ENCODE measurements at regions of chr9 and their contacts with region 1.

Region 1: GRCh38 chr9:70602321-70603019 is 188.0 kb upstream of the KLF9 start:
- DNase-seq: peak; percentile 59
- ATAC-seq: peak; percentile 76
- H3K4me3 Mint-ChIP-seq: no peak overlapping the region
- H3K27ac Mint-ChIP-seq: no peak overlapping the region
- H3K4me1 Mint-ChIP-seq: peaks cover 4% of the 10 kb centered on the region
- H3K27me3 Mint-ChIP-seq: no peaks in the 10 kb centered on the region

Region 2: DNA sequence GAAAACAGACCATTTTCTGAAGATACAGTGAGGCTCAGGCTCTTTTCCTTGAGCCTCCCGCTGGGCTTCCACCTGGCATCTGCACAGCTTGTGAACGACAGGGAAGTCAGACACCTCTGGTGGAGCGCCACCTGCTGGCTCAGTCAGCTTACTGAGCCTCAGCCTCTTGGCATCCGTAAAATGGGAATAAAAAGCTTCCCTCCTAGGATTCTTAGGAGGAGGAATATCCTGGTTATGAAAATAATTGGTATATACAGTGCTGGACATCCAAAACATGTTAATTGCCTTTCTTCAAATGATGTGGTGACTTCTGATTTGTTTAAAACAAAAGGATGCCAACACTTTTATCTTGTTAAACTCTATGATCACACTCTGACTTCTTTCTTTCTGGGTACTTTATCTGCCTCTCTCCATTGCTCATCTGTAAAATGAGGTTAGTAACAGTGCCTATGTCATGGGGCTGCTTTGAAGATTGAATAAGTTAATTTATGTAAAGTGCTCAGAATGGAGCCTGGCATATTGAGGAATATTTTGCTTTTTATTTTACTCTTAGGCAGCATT is 491.3 kb before region 1 on chr9:
- CTCF ChIA-PET with region 1: interaction called, 11 read pairs
- POLR2A ChIA-PET with region 1: no interaction called
- DNase-seq: peak; percentile 66
- ATAC-seq: peak; percentile 75
- H3K4me3 Mint-ChIP-seq: no peak overlapping the region
- H3K27ac Mint-ChIP-seq: no peak overlapping the region
- H3K4me1 Mint-ChIP-seq: no peaks in the 10 kb centered on the region
- H3K27me3 Mint-ChIP-seq: peaks cover 13% of the 10 kb centered on the region

Region 3: DNA sequence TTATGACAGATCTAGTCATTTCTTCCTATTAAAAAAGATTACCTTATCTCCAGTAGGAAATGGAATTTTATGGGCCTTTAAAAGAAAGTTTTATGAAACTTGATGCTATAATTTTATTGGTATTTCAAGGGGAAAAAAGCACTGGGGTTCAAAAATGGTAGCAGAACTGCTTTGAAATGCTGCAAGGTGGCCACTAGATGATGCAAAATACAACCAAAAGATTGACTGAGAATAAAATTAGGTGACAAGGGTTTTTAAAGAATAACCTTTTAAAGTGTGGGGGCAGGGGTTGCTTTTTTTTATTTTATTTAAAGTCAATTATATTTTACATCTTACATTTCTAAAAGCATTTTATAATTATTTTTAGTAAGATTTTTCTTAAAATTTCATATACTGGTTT is 249.7 kb before region 1 on chr9:
- CTCF ChIA-PET with region 1: interaction called, 10 read pairs
- POLR2A ChIA-PET with region 1: no interaction called
- DNase-seq: no peak
- ATAC-seq: no peak
- H3K4me3 Mint-ChIP-seq: no peak overlapping the region
- H3K27ac Mint-ChIP-seq: peak overlapping the region; percentile 41
- H3K4me1 Mint-ChIP-seq: no peaks in the 10 kb centered on the region
- H3K27me3 Mint-ChIP-seq: no peaks in the 10 kb centered on the region

Region 4: DNA sequence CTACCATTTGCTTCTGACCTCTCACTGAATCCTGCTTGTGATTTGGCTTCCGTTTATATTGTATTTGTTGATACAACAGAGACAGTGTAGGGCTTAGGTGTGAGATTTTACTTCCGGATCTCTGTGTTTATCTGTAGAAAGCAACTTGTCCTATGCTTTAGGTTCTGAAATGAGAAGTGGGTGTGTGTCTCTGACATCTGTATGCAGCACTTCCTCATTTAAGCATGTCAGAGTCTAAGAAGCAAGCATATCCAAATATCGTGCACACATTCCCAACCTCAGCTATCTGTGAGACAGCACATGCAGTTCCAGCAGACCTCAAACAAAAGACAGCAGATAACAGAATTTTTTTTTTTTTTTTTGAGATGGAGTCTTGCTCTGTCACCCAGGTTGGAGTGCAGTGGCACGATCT is 204.3 kb before region 1 on chr9:
- CTCF ChIA-PET with region 1: interaction called, 27 read pairs
- POLR2A ChIA-PET with region 1: no interaction called
- DNase-seq: no peak
- ATAC-seq: peak; percentile 89
- H3K4me3 Mint-ChIP-seq: peak overlapping the region; percentile 51
- H3K27ac Mint-ChIP-seq: peak overlapping the region; percentile 79
- H3K4me1 Mint-ChIP-seq: peaks cover 40% of the 10 kb centered on the region
- H3K27me3 Mint-ChIP-seq: no peaks in the 10 kb centered on the region

Region 5: GRCh38 chr9:70413798-70414775 is 188.4 kb before region 1 on chr9 and contains the start of gene KLF9:
- CTCF ChIA-PET with region 1: interaction called, 57 read pairs
- POLR2A ChIA-PET with region 1: interaction called, 10 read pairs
- DNase-seq: peak; percentile 97
- ATAC-seq: peak; percentile 82
- H3K4me3 Mint-ChIP-seq: peak within 1 kb of the TSS; percentile 93
- H3K27ac Mint-ChIP-seq: peak within 1 kb of the TSS; percentile 99
- H3K4me1 Mint-ChIP-seq: peaks cover 48% of the 10 kb centered on the region
- H3K27me3 Mint-ChIP-seq: no peaks in the 10 kb centered on the region
- total RNA-seq, gene KLF9: 8.8 to 9.6 TPM

Region 6: DNA sequence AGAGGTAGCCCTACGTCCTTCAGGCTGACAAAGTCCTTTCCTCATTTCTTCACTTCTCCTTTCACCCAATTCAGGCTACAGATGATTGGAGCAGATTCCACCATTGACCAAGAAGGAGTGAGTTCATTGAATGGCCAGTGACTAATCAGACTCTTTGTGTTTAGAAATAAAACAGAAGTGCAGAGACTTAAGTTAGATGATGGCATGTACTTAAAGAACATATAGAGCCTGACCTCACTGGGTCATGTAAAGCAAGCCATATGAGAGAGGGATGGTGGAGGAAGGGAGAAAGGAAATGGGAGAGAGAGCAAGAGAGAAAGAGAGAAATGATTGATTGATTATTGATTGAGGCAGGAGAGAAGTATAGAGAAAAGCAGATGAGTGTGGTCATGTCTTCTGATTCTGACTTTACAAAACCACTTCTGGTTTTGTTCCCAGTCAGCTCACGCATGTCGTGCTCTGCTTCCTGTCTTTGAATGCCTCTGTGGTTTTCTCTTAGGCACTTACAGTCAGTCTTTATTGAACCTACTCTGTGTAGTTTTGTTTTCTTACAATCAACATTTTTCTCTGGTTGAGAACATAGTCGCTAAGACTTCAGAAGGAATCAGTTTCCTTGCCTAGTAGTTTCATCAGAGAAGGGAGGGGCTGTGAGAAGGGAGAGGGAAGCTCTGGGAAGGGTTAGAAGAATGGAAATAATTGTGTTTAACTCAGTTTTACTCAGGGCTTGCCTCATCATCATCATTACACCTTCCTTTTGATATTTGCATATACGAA is 38.9 kb before region 1 on chr9:
- CTCF ChIA-PET with region 1: interaction called, 64 read pairs
- POLR2A ChIA-PET with region 1: interaction called, 4 read pairs
- DNase-seq: peak; percentile 78
- ATAC-seq: peak; percentile 91
- H3K4me3 Mint-ChIP-seq: peak overlapping the region; percentile 59
- H3K27ac Mint-ChIP-seq: peak overlapping the region; percentile 95
- H3K4me1 Mint-ChIP-seq: peaks cover 66% of the 10 kb centered on the region
- H3K27me3 Mint-ChIP-seq: no peaks in the 10 kb centered on the region

Region 7: DNA sequence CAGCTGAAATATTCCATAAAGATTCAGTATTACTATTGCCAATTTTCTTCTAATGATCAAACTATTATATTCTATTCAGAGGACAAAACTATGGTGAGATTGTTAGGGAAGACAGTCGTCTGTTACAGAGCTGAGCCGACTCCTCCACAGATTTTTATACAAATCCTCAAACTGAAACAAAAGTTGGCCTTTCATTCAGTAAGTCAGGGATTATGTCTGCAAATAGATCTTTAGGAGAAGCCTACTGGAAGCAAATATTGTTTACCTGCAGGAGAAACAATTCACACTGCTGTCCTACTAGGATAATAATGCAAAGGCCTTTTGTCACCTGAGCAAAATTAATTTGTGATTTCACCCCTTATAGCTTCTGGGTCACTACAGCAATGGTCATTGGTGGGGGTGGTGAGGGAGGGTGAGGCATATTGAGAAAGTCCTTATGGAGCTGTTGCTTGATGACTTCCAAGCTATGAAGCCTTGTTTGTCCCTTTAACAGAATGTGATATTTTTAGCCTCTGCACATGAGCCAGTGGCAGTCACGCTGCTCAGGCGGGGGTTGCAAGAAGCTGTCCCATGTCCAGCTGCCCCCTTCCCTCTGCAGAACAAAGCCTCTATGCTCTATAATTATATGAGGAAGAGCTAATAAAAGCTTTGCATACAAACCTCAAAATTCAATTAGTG is 12.5 kb after region 1 on chr9:
- CTCF ChIA-PET with region 1: interaction called, 27 read pairs
- POLR2A ChIA-PET with region 1: no interaction called
- DNase-seq: no peak
- ATAC-seq: no peak
- H3K4me3 Mint-ChIP-seq: no peak overlapping the region
- H3K27ac Mint-ChIP-seq: no peak overlapping the region
- H3K4me1 Mint-ChIP-seq: no peaks in the 10 kb centered on the region
- H3K27me3 Mint-ChIP-seq: peaks cover 16% of the 10 kb centered on the region

Region 8: GRCh38 chr9:70683840-70684239 is 81.4 kb after region 1 on chr9:
- CTCF ChIA-PET with region 1: no interaction called
- POLR2A ChIA-PET with region 1: no interaction called
- DNase-seq: no peak
- ATAC-seq: no peak
- H3K4me3 Mint-ChIP-seq: no peak overlapping the region
- H3K27ac Mint-ChIP-seq: no peak overlapping the region
- H3K4me1 Mint-ChIP-seq: no peaks in the 10 kb centered on the region
- H3K27me3 Mint-ChIP-seq: peaks cover 2% of the 10 kb centered on the region

Measured in activated CD8-positive, alpha-beta T cell treated with anti-CD3 and anti-CD28 coated beads, Interleukin-2, amount 10 ng/mL, durations not matched to agents 7 days and 5 days (primary cell).